Right cardiac atrium (tissue), 5 donors: ENCODE measurements at regions of chr4 and their contacts with region 1.

Region 1: DNA sequence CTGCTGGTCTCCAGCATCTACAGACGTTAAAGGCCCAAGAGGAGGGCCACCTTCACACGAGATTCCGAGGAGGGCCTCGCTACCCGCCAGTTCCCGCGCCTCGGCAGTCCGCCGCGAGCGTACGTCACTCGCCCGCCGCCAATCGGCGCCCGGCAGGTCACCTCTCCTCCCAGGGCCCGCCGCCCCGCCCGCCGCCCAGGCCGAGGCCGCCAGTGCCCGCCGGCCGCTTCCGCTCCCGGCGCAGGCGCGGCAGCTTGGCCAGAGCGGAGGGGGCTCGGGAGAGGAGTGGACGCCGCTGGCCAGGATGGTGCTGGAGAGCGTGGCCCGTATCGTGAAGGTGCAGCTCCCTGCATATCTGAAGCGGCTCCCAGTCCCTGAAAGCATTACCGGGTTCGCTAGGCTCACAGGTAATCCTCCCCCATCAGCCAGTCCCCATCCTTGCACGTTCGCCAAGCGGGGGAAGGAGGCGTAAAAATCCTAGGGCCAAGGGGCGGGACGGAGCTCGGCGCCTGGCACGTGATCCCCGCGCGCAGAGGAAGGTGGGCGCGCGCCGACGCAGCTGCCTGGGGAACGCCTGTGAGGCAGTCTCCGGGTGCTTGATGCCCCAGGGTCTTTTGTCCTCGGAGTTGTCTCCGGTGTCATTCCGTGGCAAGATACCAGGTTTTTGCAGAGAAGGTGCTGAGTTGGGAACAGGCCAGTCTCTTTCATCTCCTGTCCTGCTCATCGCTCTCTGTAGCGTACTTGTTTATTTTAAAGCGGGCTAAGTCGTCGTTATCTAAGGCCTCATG is at the start of gene CISD2:
- DNase-seq: peak; percentile 94 to 98 (median 97)
- ATAC-seq: peak; percentile 99
- H3K4me3 ChIP-seq: peak within 1 kb of the TSS; percentile 68
- H3K27ac ChIP-seq: peak within 1 kb of the TSS; percentile 95
- H3K4me1 ChIP-seq: no peaks in the 10 kb centered on the region
- H3K27me3 ChIP-seq: no peaks in the 10 kb centered on the region
- total RNA-seq, gene CISD2: 18.3 to 22.1 (median 20.5) TPM

Region 2: DNA sequence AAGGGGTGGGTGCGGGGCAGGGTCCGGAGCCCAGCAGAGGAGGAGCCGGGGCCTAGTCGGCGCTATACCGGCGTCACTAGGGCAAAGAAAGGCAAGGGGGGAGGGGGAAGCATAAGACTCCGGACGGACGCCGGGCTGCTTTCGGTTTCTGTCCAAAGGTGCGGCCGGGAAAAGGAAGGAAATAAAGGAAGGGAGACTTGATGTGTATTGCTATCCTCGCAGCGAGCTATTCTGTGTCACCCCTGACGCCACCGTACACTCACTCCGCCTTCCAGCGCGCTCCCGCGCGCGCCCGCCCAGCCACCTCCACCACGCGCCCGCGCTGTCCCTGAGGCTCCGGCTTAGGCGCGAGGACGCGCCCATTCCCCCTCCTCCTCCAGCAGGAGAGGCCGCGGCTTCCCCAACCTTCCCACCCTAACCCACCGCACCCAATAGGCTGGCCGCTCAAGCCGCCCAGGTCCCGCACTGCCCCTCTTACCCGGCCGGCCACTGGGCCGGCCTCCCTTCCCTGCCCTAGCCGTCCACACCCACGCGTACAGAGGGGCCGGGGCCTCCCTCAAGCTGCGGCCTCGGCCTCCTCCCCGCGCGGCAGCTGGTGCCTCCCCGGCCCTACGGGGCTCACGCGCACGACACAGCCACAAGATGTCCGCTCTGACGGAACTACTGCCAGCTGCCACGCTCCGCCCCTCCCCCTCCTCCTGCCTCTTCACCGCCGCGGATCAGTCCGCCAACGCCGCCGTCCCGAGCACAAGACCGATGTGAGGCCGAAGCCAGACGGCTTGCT is 41.9 kb before region 1 on chr4 and contains the start of gene UBE2D3:
- intact Hi-C with region 1: loop called in 1 of 4 experiments (anchors 2 kb)
- DNase-seq: peak; percentile 94 to 98 (median 97)
- ATAC-seq: peak; percentile 81 to 82
- H3K4me3 ChIP-seq: peak within 1 kb of the TSS; percentile 100
- H3K27ac ChIP-seq: peak within 1 kb of the TSS; percentile 99
- H3K4me1 ChIP-seq: no peaks in the 10 kb centered on the region
- H3K27me3 ChIP-seq: no peaks in the 10 kb centered on the region
- total RNA-seq, gene UBE2D3: 258 to 278 (median 259) TPM